Esophagus squamous epithelium (tissue), 5 donors: ENCODE measurements at regions of chr4 and their contacts with region 1.

Region 1: DNA sequence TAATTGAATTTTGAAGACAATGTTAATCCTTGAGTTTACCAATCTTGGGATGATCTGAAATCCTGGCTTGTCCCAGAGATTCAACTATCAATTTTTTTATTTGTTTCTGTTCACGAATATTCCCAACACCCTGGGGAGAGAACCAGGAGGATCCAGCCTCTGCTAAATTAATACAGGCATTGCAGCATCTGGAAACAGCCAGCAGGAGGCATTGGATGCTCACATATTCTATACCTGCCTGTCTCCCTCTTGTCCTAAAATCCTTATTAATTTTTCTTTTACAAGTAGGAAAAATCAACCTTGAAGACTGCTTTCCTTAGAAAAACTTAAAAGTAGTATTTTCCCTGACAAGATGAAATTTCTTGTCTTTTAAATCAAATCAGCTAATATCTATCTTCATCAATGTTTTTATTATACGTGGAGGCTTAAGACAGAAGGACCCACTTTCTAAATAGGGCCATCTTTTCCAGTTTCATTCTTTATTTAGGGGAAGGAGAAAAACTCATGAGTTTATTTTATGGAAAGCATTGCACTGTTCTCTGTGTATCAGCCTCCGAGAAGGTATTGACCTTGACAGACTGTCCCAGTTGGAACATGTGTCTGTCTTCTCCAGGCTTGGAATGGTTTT is 102.4 kb downstream of the CLNK start:
- DNase-seq: no peak
- H3K4me3 ChIP-seq: no peak overlapping the region
- H3K27ac ChIP-seq: no peak overlapping the region
- H3K4me1 ChIP-seq: peaks cover 0 to 19% (median 3%) of the 10 kb centered on the region in 3 donors
- H3K27me3 ChIP-seq: no peaks in the 10 kb centered on the region
- CTCF ChIP-seq: peak; percentile 33 to 89 (median 80)
- POLR2A ChIP-seq: no peak

Region 2: DNA sequence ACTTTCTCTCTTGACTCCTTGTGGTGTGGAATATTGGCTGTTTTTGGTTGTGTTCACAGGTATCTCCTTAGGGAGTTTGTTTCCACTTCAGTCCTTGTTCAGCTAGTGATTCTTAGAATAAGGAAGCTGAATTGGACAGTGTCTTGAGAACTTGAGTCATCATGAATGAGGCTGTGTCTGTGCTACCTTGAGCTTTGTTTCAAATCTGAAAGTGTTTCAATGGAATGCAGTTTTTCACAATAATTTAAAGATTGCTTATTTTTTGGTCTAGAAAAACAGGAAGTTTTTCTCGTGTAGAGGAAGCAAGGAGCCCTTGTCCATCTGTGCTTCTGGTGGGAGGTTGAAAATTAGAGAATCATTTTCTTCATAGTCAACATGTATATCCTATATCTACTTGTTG is 201.4 kb before region 1 on chr4:
- intact Hi-C with region 1: no loop called
- DNase-seq: no peak
- H3K4me3 ChIP-seq: no peak overlapping the region
- H3K27ac ChIP-seq: no peak overlapping the region
- H3K4me1 ChIP-seq: no peaks in the 10 kb centered on the region
- H3K27me3 ChIP-seq: peaks cover 0 to 11% (median 0%) of the 10 kb centered on the region in 4 donors
- CTCF ChIP-seq: no peak
- POLR2A ChIP-seq: no peak

Region 3: DNA sequence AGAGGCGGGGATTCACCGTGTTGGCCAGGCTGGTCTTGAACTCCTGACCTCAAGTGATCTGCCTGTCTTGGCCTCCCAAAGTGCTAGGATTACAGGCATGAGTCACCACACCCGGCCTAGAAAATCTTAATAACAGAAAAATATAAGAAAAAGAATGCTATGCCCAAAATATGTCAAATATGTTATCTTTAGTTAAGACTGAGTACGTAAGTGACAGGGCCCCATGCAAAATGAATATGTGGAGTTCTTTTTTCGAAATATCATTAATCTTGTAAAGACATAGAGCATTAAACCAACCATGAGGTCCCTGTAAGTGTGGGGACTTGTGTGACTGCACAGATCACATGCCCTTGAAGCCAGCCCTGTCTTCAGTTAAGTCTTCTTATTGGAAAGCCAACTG is 116.0 kb before region 1 on chr4:
- intact Hi-C with region 1: no loop called
- DNase-seq: no peak
- H3K4me3 ChIP-seq: no peak overlapping the region
- H3K27ac ChIP-seq: no peak overlapping the region
- H3K4me1 ChIP-seq: peaks cover under 1 to 9% (median 3%) of the 10 kb centered on the region in 3 donors
- H3K27me3 ChIP-seq: peaks cover 0 to 45% (median 4%) of the 10 kb centered on the region in 4 donors
- CTCF ChIP-seq: no peak
- POLR2A ChIP-seq: no peak

Region 4: DNA sequence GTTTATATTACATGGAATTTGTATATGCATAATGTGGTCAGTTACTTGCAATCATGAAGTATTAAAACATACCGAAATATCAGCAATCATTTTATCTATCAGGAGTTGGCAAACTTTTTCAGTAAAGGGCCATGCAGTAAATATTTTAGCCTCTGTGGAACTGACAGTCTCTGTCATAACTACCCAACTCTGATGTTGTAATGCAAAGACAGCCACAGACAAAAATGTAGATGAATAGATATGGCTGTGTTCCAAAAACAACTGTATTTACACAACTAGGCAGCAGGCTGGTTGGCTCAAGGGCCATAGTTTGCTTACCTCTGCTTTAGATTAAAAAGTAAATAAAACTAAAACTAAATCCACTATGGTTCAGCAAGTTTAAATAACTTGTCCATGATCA is 646.4 kb after region 1 on chr4:
- intact Hi-C with region 1: no loop called
- DNase-seq: no peak
- H3K4me3 ChIP-seq: no peak overlapping the region
- H3K27ac ChIP-seq: no peak overlapping the region
- H3K4me1 ChIP-seq: no peaks in the 10 kb centered on the region
- H3K27me3 ChIP-seq: peaks cover 0 to 5% (median 0%) of the 10 kb centered on the region in 4 donors
- CTCF ChIP-seq: no peak
- POLR2A ChIP-seq: no peak

Region 5: DNA sequence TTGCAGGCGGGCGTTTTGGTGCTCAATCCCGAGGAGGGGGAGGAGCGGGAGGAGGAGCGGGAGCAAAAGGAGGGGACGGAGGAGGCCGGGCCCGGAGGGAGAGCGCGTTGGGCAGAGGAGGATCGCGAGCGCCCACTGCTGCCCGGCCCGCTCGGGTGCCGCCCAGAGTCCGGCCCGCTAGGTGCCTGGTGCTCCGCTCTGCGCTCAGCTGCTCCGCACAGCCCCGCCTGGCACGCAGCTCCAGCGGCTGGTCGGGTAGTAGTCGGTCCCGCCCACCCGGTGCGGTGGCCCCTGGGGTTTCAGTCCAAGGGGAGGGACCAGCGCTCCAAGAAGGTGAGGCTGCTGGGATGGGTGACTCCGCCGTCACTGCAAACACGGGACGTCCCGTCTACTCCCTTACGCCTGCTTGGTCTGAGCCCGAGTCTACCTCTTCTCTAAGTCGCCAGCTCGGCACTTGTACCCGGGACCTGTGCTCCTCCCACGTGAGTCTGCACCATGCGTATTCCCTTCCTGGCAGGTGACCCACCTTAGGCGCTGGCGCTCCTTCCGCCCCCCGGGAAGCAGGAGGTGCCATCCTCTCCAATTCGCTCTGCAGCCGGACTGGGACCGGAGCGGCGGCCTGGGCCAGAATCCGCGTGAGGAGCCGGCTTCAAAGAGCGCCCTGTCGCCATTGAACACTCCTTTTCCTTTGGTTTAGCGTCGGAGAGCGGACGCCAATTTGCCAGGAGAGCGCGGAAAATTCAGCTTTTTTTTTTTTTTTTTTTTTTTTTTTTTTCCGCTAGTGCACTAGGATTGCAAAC is 846.9 kb after region 1 on chr4:
- intact Hi-C with region 1: loop called (anchors 5 kb)
- DNase-seq: peak; percentile 42
- H3K4me3 ChIP-seq: peak overlapping the region; percentile 80 to 86 (median 84)
- H3K27ac ChIP-seq: peak overlapping the region; percentile 85 to 92 (median 90)
- H3K4me1 ChIP-seq: peaks cover 7 to 66% (median 11%) of the 10 kb centered on the region in 3 donors
- H3K27me3 ChIP-seq: peaks cover 0 to 25% (median 0%) of the 10 kb centered on the region in 4 donors
- CTCF ChIP-seq: peak; percentile 55 to 87 (median 74)
- POLR2A ChIP-seq: peak in 1 of 4 donors; percentile 62

Region 6: GRCh38 chr4:11720292-11720691 is 1138.1 kb after region 1 on chr4:
- intact Hi-C with region 1: loop called (anchors 10 kb)
- DNase-seq: no peak
- H3K4me3 ChIP-seq: no peak overlapping the region
- H3K27ac ChIP-seq: peak overlapping the region in 2 of 4 donors; percentile 20 to 42
- H3K4me1 ChIP-seq: peaks cover 0 to 6% (median 0%) of the 10 kb centered on the region in 3 donors
- H3K27me3 ChIP-seq: no peaks in the 10 kb centered on the region
- CTCF ChIP-seq: peak; percentile 48 to 91 (median 68)
- POLR2A ChIP-seq: no peak